AG04449 (cell line): ENCODE measurements at regions of chr4 and their contacts with region 1.

Region 1: GRCh38 chr4:76499461-76499860 is 64.4 kb downstream of the SHROOM3 start:
- DNase-seq: no peak
- H3K4me3 ChIP-seq: no peak overlapping the region
- CTCF ChIP-seq: no peak

Region 2: DNA sequence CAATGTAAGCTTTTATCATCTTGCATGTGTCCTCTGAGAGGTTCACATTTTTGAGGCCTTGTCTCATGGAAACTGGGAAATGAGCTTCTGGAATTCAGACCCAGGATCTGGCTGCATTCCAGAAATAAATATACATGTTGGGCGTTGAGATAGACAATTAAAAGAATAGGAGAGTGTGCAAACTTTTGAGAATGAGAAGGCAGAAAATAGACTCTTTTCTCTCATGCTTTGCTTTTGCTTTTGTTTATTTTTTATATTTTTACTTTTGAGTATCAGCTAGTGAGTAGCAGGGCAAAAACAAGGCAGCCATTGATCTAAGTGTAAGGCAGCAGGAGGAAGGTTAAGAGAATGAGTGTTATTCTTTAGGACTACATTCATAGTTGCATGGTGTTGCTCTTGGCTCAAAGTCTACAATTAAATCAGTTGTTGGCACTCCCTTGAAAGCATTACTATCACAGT is 52.0 kb before region 1 on chr4:
- CTCF ChIA-PET with region 1: interaction called, 586 read pairs
- POLR2A ChIA-PET with region 1: no interaction called
- DNase-seq: peak; percentile 24
- H3K4me3 ChIP-seq: no peak overlapping the region
- CTCF ChIP-seq: no peak

Region 3: GRCh38 chr4:76485450-76485849 is 14.0 kb before region 1 on chr4:
- CTCF ChIA-PET with region 1: interaction called, 38 read pairs
- POLR2A ChIA-PET with region 1: no interaction called
- DNase-seq: no peak
- H3K4me3 ChIP-seq: no peak overlapping the region
- CTCF ChIP-seq: no peak